ENCODE measurements at regions of chr1 and their contacts with region 1.

Region 1: DNA sequence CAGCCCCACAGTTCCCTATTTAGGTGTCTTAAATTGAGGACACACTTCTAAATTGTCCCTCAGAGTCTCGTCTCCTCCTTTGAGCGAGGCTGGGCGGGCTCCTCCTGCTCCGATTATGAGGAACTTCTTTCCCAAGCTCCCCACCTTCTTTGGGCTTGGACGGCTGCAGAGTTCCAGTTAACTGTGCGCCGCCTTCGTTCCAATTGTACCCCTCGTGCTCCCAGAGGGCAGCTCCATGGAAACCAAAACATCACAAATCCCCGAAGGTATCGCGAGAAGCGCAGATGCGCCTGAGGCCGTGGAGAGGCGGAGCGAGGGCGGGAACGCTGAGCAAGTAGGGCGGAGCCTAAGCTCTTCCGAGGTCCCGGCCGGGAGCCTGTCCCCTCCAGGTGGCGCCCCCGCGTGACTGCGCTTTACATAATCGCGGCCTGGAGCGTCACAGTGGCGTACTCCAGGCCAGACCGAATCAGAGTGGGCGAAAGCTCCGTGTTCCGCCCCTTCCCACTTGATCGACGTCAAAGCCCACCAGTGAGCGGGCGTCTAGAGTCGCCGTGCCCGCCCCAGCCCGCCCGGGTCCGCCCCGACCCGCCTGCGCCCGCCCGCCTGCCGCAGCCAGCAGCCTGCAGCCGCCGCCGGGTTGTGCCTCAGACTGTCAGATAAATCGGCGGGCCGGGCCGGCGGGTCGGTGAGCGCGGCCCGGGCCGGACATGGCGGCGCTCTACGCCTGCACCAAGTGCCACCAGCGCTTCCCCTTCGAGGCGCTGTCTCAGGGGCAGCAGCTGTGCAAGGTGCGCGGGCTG is at the start of gene FAM76A:
- DNase-seq: peak; percentile 100
- H3K4me3 ChIP-seq: peak within 1 kb of the TSS; percentile 76 to 100 (median 87)
- H3K27ac ChIP-seq: peak within 1 kb of the TSS; percentile 93 to 99 (median 97)
- H3K4me1 ChIP-seq: peaks cover 0 to 19% (median 17%) of the 10 kb centered on the region in 4 donors
- H3K27me3 ChIP-seq: no peaks in the 10 kb centered on the region
- CTCF ChIP-seq: peak in 1 of 4 experiments; percentile 20
- EP300 ChIP-seq: no peak
- POLR2A ChIP-seq: peak in 1 of 2 donors; percentile 53
- total RNA-seq, gene FAM76A: 11.9 to 24.3 (median 19.1) TPM

Region 2: GRCh38 chr1:27416387-27417111 is 309.0 kb before region 1 on chr1:
- intact Hi-C with region 1: no loop called
- DNase-seq: no peak
- H3K4me3 ChIP-seq: no peak overlapping the region
- H3K27ac ChIP-seq: peak overlapping the region; percentile 81 to 91 (median 85)
- H3K4me1 ChIP-seq: peaks cover 3 to 54% (median 45%) of the 10 kb centered on the region in 4 donors
- H3K27me3 ChIP-seq: no peaks in the 10 kb centered on the region
- CTCF ChIP-seq: peak; percentile 54 to 63 (median 60)
- EP300 ChIP-seq: no peak
- POLR2A ChIP-seq: no peak

Region 3: DNA sequence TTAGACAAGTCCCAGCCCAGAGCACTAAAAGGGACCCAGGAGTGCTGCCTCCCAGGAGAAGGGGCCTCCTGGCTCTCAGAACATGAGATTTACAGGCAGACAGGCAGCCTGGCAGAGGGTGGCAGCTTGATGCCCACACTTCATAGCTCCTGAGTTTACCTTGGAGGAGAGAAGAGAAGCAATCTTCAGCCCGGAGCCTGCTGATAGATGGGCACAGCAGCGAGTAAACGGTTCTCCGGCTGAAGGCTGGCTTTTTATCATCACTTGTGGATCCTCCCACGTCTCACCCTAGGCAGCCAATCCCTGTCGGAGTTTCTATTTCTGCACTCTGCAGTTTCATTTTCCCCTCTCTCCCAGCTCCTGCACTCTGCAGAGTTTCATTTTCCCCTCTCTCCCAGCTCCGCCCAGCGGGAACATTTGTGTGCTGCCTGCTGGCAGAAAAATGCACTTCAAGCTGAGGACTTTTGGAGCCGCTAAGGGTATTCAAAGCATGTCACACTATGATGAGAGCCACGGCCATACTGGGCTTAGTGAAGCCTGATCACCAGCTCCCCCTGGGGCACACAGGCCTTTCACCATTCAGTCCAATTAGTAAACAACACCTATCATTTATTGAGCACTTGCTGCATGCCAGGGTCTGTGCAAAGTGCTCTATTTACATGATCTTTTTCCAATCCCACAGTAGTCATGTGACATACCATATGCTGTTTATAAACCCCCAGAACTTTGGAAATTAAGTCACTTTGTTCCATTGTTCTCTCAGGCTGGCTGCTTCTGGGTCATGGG is 53.4 kb before region 1 on chr1 and contains the start of gene IFI6:
- intact Hi-C with region 1: loop called (anchors 2 kb)
- DNase-seq: peak; percentile 94
- H3K4me3 ChIP-seq: peak within 1 kb of the TSS; percentile 37 to 55 (median 54)
- H3K27ac ChIP-seq: peak within 1 kb of the TSS; percentile 87 to 93 (median 91)
- H3K4me1 ChIP-seq: peaks cover 0 to 38% (median 28%) of the 10 kb centered on the region in 4 donors
- H3K27me3 ChIP-seq: no peaks in the 10 kb centered on the region
- CTCF ChIP-seq: peak in 3 of 4 experiments; percentile 43 to 61 (median 55)
- EP300 ChIP-seq: no peak
- POLR2A ChIP-seq: peak; percentile 38 to 57
- total RNA-seq, gene IFI6: 33.6 to 118 (median 82.0) TPM

Measured in sigmoid colon (tissue), 7 donors.